Sciatic nerve (tissue), 2 donors: ENCODE measurements at regions of chr12 and their contacts with region 1.

Region 1: GRCh38 chr12:91804533-91804932 is 341.1 kb downstream of the BTG1 start:
- DNase-seq: no peak
- ATAC-seq: no peak

Region 2: DNA sequence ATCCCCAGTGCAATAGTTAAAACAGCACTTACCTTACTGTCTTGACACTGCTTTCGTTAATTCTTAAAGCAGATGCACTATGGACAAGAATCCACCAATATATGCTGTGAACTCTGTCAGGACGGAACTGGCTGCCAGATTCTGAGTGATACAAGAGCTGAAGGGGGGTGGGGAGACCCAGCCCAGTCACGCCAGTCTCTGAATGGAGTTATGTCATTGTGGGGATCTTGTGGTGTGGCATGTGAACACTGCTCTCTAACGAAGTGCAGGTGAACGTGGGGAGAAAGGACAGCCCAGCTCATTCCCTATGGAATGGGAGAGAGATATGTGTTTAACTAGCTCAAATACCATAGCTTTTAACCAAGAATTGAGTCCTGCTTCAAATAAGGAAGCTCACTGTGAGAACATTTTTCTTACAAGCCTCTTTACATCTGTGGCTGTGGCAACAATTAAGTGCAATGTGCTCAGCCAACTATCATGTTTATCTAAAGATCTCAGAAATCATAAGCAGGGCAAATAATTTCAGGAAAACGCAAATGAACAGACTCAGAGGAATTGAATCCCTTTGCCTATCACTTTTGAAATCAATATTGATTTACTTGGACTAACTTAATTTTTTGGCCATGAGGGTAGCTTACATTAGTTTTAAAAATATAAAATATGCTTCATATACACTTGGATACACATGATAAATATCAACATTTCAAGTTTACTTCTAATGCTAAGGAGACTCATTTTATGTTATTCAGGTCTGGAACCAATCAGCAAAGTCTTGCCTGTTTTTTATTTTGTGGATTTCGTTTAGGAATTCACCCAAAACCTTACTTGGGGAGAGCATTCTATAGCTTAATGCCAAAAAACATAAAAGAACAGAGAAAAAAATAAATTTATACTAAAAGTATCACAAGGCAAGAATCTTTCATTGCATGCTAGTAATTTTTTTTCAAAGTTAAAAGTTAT is 692.9 kb before region 1 on chr12 and contains the start of gene LUM:
- intact Hi-C with region 1: no loop called
- DNase-seq: peak; percentile 67
- ATAC-seq: peak; percentile 90
- total RNA-seq, gene LUM: 206 TPM

Region 3: DNA sequence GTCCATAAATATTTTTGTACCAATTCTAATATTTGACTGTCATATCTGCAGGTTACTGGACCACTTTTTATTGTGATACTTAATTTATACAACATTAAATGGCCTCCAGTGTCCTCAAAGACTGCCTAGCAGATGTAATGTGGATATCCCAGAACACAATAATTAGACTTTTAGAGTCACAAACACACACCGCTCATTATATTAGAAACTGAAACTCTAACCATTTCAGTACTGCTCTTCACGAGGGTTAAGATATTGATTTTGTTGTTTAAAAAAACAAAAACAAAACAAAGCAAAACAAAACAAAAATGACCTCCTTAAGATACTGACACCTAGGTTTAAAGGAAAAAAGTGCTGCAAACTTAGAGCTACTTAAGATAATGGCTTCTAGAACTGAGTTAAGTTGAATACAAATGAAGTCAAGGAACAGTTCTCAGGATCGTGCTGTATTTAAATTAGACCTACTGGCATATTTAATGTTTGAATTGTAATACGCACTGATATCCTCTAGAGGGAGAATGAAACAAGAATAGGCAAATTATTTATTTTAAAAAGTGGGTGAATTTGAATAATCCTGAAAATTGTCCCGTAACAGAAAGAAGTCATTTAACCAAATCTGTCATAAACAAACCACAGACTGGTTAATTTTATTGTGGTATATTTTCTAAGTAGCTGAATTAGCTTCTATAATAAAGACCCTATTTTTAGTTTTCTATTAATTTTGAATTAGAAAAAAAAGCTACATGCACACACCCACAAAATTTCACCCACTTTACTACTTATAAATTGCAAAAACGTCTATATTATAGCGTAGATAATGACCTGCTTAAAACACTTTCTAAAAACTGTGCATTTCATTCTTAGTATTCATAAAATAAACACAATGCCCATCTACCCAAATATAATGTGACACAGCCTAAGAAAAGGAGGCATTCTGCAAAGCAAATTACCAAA is 226.7 kb before region 1 on chr12:
- intact Hi-C with region 1: no loop called
- DNase-seq: no peak
- ATAC-seq: peak; percentile 60

Region 4: DNA sequence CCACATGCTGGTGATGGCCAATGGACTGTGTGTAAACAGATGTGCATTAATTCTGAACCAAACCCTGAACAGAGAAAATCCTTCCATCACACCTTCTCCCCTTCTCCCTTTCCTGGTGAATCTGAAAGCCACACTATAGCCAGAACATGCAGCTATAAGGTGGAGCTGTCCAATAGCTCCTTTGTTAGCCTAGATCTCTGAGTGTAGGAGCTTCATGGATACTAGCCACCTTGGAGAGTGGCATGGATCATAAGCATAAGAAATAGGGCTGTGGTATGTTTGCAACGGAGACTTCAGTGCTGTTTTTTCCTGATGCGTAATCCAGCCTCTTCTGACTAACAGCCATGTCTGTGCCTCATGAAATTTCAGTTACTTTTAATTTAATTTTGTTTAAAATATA is 23.4 kb before region 1 on chr12:
- intact Hi-C with region 1: loop called (anchors 2 kb)
- DNase-seq: no peak
- ATAC-seq: no peak